Activated CD8-positive, alpha-beta memory T cell treated with anti-CD3 and anti-CD28 coated beads, Interleukin-2, amount 10 ng/mL, durations not matched to agents 7 days and 5 days (primary cell): ENCODE measurements at regions of chr5 and their contacts with region 1.

Region 1: DNA sequence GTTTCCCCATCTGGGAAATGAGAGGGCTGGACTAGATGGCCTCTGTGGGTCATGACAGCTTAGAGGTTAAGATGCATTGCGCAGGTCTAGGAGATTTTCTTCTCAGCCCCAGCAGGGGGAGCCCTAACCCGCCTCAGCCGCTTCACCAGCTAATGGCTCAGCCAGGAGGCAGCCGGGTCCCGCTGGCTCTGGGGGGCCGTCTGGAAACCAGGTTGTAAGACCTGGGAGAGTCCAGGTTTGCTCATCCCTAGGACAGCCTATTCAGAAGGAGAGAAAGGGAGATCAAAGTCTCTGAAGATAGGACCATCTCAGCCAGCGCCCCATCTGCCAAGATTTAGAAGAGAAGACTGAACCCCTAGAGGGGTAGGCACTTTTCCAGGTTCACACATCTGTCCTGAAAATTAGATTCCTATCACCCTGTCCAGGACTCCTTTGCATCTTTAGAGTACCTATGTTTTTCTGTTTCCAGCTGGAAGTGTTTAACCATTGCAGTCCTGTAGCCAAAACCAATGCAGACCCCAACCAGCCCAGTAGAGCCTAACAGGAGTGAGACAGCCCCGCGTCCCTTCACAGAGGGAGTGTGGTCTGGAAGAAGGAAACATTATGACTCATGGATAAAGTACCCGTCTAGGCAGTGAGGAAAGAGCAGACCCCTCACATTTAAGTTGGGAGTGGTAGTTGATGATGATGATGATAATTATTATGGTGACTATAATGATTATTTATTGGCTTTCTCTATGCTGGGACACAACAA is 27.5 kb downstream of the SPARC start:
- DNase-seq: peak; percentile 85
- ATAC-seq: peak; percentile 97
- H3K4me3 Mint-ChIP-seq: no peak overlapping the region
- H3K27ac Mint-ChIP-seq: no peak overlapping the region
- H3K4me1 Mint-ChIP-seq: peaks cover 13% of the 10 kb centered on the region
- H3K27me3 Mint-ChIP-seq: peaks cover 29% of the 10 kb centered on the region

Region 2: GRCh38 chr5:151523335-151523734 is 135.8 kb before region 1 on chr5:
- CTCF ChIA-PET with region 1: no interaction called
- DNase-seq: peak; percentile 58
- ATAC-seq: peak; percentile 82
- H3K4me3 Mint-ChIP-seq: no peak overlapping the region
- H3K27ac Mint-ChIP-seq: no peak overlapping the region
- H3K4me1 Mint-ChIP-seq: no peaks in the 10 kb centered on the region
- H3K27me3 Mint-ChIP-seq: peaks cover 4% of the 10 kb centered on the region

Region 3: DNA sequence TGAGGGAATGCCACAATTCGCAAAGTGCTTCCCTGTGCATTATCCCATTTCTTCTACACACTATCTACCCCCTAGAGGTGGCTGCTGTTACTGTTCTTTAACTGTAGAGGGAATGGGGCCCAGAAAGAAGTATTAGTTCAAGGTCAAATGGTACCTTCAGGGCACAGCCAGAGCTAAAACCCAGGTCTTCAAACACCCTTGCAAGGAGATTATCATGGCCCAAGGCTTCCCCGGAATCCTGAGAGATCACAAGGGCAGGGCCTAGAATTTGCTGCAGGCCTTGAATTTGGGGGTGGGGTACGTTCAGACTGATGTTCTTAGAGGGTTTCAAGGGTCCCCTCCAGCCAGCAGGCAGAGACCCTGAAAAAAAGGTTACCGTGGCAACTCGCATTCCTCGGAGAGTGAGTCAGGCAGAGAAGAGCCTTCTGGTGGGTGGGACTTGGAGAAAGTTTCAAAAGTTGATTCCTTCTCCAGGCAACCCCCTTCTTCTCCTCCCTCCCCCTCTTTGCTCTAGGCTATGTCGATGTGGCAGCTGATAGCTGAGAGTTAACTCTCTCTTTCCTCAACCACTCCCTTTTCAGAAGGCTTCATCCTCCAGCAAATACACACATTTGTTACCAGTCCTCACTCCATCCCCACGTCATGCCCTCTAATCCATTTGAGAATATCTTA is 25.6 kb after region 1 on chr5:
- CTCF ChIA-PET with region 1: interaction called, 14 read pairs
- DNase-seq: no peak
- ATAC-seq: no peak
- H3K4me3 Mint-ChIP-seq: no peak overlapping the region
- H3K27ac Mint-ChIP-seq: no peak overlapping the region
- H3K4me1 Mint-ChIP-seq: peaks cover 9% of the 10 kb centered on the region
- H3K27me3 Mint-ChIP-seq: peaks cover 35% of the 10 kb centered on the region

Region 4: DNA sequence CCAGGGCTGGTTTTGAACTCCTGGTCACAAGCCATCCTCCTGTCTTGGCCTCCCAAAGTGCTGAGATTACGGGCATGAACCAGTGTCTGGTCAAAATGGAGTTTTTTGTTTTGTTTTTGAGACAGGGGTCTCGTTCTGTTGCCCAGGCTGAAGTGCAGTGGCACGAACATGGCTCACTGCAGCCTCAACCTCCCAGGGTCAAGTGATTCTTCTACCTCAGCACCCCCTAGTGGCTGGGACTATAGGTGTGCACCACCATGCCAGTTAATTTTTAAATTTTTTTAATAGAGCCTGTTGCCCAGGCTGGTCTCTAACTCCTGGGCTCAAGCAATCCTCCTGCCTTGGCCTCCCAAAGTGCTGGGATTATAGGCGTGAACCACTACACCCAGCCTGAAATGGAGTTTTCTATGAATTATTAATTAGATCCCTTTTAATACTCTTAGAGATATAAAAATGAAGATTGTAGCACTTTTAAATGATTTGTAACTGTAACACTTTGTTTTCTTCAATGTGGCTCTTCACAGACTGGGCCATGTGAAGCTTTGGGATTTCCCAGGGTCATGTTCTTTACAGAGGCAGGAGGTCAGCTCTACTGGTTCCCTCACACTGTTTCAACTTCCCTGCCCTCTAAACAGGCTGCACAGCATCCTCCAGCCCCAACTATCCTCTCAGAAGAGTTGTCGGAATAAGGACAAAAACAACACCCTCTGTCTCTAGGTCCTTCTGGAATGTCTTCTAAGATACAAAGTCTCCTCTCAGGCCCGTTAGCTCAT is 60.2 kb after region 1 on chr5:
- CTCF ChIA-PET with region 1: interaction called, 12 read pairs
- DNase-seq: peak; percentile 49
- ATAC-seq: no peak
- H3K4me3 Mint-ChIP-seq: no peak overlapping the region
- H3K27ac Mint-ChIP-seq: no peak overlapping the region
- H3K4me1 Mint-ChIP-seq: peaks cover 17% of the 10 kb centered on the region
- H3K27me3 Mint-ChIP-seq: no peaks in the 10 kb centered on the region

Region 5: GRCh38 chr5:151740336-151740942 is 81.3 kb after region 1 on chr5:
- CTCF ChIA-PET with region 1: interaction called, 72 read pairs
- DNase-seq: peak; percentile 65
- ATAC-seq: peak; percentile 63
- H3K4me3 Mint-ChIP-seq: no peak overlapping the region
- H3K27ac Mint-ChIP-seq: no peak overlapping the region
- H3K4me1 Mint-ChIP-seq: peaks cover 18% of the 10 kb centered on the region
- H3K27me3 Mint-ChIP-seq: no peaks in the 10 kb centered on the region

Region 6: DNA sequence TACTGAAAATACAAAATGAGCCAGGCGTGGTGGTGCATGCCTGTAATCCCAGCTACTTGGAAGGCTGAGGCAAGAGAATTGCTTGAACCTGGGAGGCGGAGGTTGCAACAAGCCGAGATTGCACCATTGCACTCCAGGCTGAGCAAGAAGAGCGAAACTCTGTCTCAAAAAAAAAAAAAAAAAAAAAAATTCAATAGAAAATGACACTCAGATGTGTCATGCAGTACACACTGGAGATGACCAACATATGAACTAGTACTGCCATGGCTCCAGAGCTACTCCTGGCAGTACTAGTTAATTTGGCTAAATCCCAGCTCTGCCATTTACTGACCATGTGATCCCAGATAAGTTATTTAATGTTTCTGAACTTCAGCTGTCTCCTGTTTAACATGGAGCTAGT is 91.9 kb after region 1 on chr5:
- CTCF ChIA-PET with region 1: interaction called, 11 read pairs
- DNase-seq: no peak
- ATAC-seq: no peak
- H3K4me3 Mint-ChIP-seq: no peak overlapping the region
- H3K27ac Mint-ChIP-seq: no peak overlapping the region
- H3K4me1 Mint-ChIP-seq: peaks cover 43% of the 10 kb centered on the region
- H3K27me3 Mint-ChIP-seq: no peaks in the 10 kb centered on the region

Region 7: GRCh38 chr5:151771259-151772028 is 112.3 kb after region 1 on chr5 and contains the start of gene G3BP1:
- CTCF ChIA-PET with region 1: interaction called, 51 read pairs
- DNase-seq: peak; percentile 100
- ATAC-seq: peak; percentile 82
- H3K4me3 Mint-ChIP-seq: peak within 1 kb of the TSS; percentile 83
- H3K27ac Mint-ChIP-seq: peak within 1 kb of the TSS; percentile 92
- H3K4me1 Mint-ChIP-seq: peaks cover 34% of the 10 kb centered on the region
- H3K27me3 Mint-ChIP-seq: no peaks in the 10 kb centered on the region
- total RNA-seq, gene G3BP1: 192 to 279 TPM